HCT116 (cell line): ENCODE measurements at regions of chr12 and their contacts with region 1.

Region 1: GRCh38 chr12:56127888-56128669 is at the start of gene ESYT1:
- DNase-seq: peak; percentile 100
- ATAC-seq: peak; percentile 93
- H3K4me3 ChIP-seq: peak within 1 kb of the TSS; percentile 90 to 91
- H3K27ac ChIP-seq: peak within 1 kb of the TSS; percentile 76
- H3K4me1 ChIP-seq: peaks cover 16 to 33% of the 10 kb centered on the region in 2 experiments
- H3K27me3 ChIP-seq: no peaks in the 10 kb centered on the region
- CTCF ChIP-seq: no peak
- POLR2A ChIP-seq: peak; percentile 88
- RAD21 ChIP-seq: no peak
- total RNA-seq, gene ESYT1: 80.9 TPM

Region 2: GRCh38 chr12:56104109-56104814 is 23.8 kb before region 1 on chr12 and contains the start of gene PA2G4:
- CTCF ChIA-PET with region 1: interaction called, 4 read pairs
- POLR2A ChIA-PET with region 1: interaction called, 17 read pairs
- RAD21 ChIA-PET with region 1: no interaction called
- intact Hi-C with region 1: no loop called
- DNase-seq: peak; percentile 98
- ATAC-seq: peak; percentile 95
- H3K4me3 ChIP-seq: peak within 1 kb of the TSS; percentile 88 to 98
- H3K27ac ChIP-seq: peak within 1 kb of the TSS; percentile 94
- H3K4me1 ChIP-seq: peaks cover 9 to 26% of the 10 kb centered on the region in 2 experiments
- H3K27me3 ChIP-seq: no peaks in the 10 kb centered on the region
- CTCF ChIP-seq: no peak
- POLR2A ChIP-seq: peak; percentile 92
- RAD21 ChIP-seq: no peak
- total RNA-seq, gene PA2G4: 302 TPM

Region 3: DNA sequence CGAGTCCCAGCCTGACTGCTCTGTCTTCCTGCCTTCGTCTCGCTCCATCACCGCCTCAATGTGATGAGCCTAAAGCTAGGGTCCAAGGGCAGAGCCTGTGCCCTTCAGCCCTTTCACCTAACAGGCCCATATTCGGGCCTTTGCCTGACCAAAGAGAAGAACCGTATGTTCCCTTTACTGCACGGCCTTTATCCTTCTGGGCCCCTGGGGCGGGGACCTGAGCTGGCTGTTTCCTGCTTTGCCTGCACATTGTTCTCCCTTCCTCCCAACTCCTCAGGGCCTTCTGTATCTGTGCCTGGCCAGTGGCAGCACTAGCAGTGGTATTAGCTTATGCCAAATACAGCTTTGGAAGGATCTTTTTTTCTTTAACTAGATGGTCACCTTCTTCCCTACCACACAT is 15.8 kb after region 1 on chr12:
- CTCF ChIA-PET with region 1: interaction called, 3 read pairs
- POLR2A ChIA-PET with region 1: interaction called, 14 read pairs
- RAD21 ChIA-PET with region 1: no interaction called
- intact Hi-C with region 1: no loop called
- DNase-seq: no peak
- ATAC-seq: no peak
- H3K4me3 ChIP-seq: no peak overlapping the region
- H3K27ac ChIP-seq: no peak overlapping the region
- H3K4me1 ChIP-seq: peaks cover 0 to 5% of the 10 kb centered on the region in 2 experiments; a peak in 2 of 4 replicates
- H3K27me3 ChIP-seq: no peaks in the 10 kb centered on the region
- CTCF ChIP-seq: no peak
- POLR2A ChIP-seq: no peak
- RAD21 ChIP-seq: no peak

Region 4: GRCh38 chr12:56152318-56153033 is 24.4 kb after region 1 on chr12 and contains the start of gene MYL6B:
- CTCF ChIA-PET with region 1: interaction called, 7 read pairs
- POLR2A ChIA-PET with region 1: interaction called, 18 read pairs
- RAD21 ChIA-PET with region 1: interaction called in 1 of 2 experiments, 3 read pairs
- intact Hi-C with region 1: loop called (anchors 2 kb)
- DNase-seq: peak; percentile 81
- ATAC-seq: peak; percentile 86
- H3K4me3 ChIP-seq: peak within 1 kb of the TSS; percentile 68 to 71
- H3K27ac ChIP-seq: peak within 1 kb of the TSS; percentile 91
- H3K4me1 ChIP-seq: peaks cover 17 to 26% of the 10 kb centered on the region in 2 experiments
- H3K27me3 ChIP-seq: no peaks in the 10 kb centered on the region
- CTCF ChIP-seq: no peak
- POLR2A ChIP-seq: no peak
- RAD21 ChIP-seq: no peak
- total RNA-seq, gene MYL6B: 94.3 TPM

Region 5: DNA sequence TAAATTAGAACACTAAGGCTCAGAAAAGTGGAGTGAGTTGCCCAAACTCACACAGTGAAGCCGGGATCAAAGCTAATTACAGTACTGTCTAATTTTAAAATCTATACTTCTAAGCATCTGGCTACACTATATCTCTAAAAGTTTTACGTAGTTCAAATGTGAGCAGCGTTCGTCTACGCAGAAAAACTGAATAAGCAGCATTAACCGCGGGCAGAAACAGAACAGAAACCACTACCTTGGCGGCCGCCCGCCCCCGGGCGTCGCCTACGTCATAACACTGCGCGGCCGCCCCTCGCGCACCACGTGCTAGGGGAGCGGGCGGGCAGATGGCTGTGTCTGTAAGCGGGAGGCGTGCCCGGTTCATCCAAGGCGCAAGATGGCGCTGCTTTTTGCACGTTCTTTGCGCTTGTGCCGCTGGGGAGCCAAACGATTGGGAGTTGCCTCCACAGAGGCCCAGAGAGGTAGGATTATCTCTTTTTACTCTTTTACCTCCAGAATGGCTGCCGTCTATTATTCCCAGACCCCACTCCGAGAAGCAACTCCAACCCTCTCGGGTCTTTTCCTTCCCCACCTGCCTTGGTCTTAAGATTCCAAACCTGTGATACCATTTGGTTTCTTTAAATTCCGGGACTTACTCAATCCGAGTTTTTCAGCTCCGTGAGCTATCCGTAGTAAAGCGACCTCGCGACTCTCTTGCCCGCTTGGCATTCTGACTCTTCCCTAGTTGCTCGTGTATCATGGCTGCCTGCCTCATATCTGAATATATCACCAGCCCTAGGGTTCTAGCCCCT is 340.3 kb after region 1 on chr12 and contains the start of gene SPRYD4:
- CTCF ChIA-PET with region 1: no interaction called
- POLR2A ChIA-PET with region 1: no interaction called
- RAD21 ChIA-PET with region 1: no interaction called
- intact Hi-C with region 1: loop called (anchors 2 kb)
- DNase-seq: peak; percentile 82
- ATAC-seq: peak; percentile 84
- H3K4me3 ChIP-seq: peak within 1 kb of the TSS; percentile 74 to 99
- H3K27ac ChIP-seq: peak within 1 kb of the TSS; percentile 68
- H3K4me1 ChIP-seq: peaks cover 5 to 26% of the 10 kb centered on the region in 2 experiments
- H3K27me3 ChIP-seq: no peaks in the 10 kb centered on the region
- CTCF ChIP-seq: peak; percentile 15 to 43 (median 24); a peak in 2 of 6 replicates
- POLR2A ChIP-seq: peak; percentile 95
- RAD21 ChIP-seq: no peak
- total RNA-seq, gene SPRYD4: 2.5 TPM